ENCODE measurements at regions of chr5 and their contacts with region 1.

Region 1: GRCh38 chr5:168712280-168712924 is 133.2 kb upstream of the PANK3 start:
- DNase-seq: peak; percentile 55
- H3K4me3 ChIP-seq: no peak overlapping the region
- H3K27ac ChIP-seq: peak overlapping the region; percentile 72
- H3K4me1 ChIP-seq: peaks cover 19% of the 10 kb centered on the region
- H3K27me3 ChIP-seq: no peaks in the 10 kb centered on the region
- CTCF ChIP-seq: no peak
- POLR2A ChIP-seq: no peak

Region 2: GRCh38 chr5:168579488-168580226 is 132.7 kb before region 1 on chr5:
- CTCF ChIA-PET with region 1: no interaction called
- POLR2A ChIA-PET with region 1: no interaction called
- dilution Hi-C with region 1: no loop called
- intact Hi-C with region 1: loop called (anchors 1 kb)
- DNase-seq: peak; percentile 99
- H3K4me3 ChIP-seq: peak overlapping the region in 2 of 3 experiments; percentile 80 to 100
- H3K27ac ChIP-seq: peak overlapping the region; percentile 92
- H3K4me1 ChIP-seq: peaks cover 24% of the 10 kb centered on the region
- H3K27me3 ChIP-seq: no peaks in the 10 kb centered on the region
- CTCF ChIP-seq: no peak
- POLR2A ChIP-seq: peak; percentile 92

Region 3: GRCh38 chr5:168693297-168693696 is 19.1 kb before region 1 on chr5:
- CTCF ChIA-PET with region 1: no interaction called
- POLR2A ChIA-PET with region 1: no interaction called
- dilution Hi-C with region 1: no loop called
- intact Hi-C with region 1: no loop called
- DNase-seq: no peak
- H3K4me3 ChIP-seq: no peak overlapping the region
- H3K27ac ChIP-seq: no peak overlapping the region
- H3K4me1 ChIP-seq: no peaks in the 10 kb centered on the region
- H3K27me3 ChIP-seq: no peaks in the 10 kb centered on the region
- CTCF ChIP-seq: no peak
- POLR2A ChIP-seq: no peak

Measured in endothelial cell of umbilical vein (primary cell).